ENCODE measurements at regions of chr6 and their contacts with region 1.

Region 1: GRCh38 chr6:143149771-143150170 is 89.1 kb downstream of the AIG1 start:
- DNase-seq: no peak
- ATAC-seq: no peak
- H3K4me3 ChIP-seq: no peak overlapping the region
- H3K4me3 Mint-ChIP-seq: no peak overlapping the region
- H3K27ac ChIP-seq: no peak overlapping the region
- H3K27ac Mint-ChIP-seq: no peak overlapping the region
- H3K4me1 ChIP-seq: no peaks in the 10 kb centered on the region
- H3K4me1 Mint-ChIP-seq: no peaks in the 10 kb centered on the region
- H3K27me3 ChIP-seq: no peaks in the 10 kb centered on the region
- H3K27me3 Mint-ChIP-seq: no peaks in the 10 kb centered on the region

Region 2: DNA sequence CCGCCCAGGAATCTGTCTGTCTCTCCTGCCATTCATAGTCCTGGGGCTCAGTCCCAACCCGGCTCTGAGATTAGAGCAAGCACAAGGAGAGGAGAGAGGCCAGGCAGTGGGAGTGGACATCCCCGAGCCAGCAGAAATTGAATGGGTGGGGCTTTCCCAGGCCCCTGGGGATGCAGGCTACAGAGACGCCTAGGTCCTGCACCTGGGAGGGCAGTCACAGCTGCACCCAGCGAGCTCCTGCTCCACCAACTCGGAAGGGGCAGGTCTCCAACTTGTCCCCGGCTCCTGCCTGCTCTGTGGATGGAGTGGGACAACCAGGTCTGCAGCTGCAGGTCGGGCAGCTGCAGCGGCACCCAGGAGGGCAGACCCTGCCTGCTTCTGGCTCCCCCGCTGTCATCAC is 100.2 kb before region 1 on chr6:
- CTCF ChIA-PET with region 1: no interaction called
- POLR2A ChIA-PET with region 1: interaction called in 1 of 2 experiments, 10 read pairs
- DNase-seq: no peak
- ATAC-seq: no peak
- H3K4me3 ChIP-seq: no peak overlapping the region
- H3K4me3 Mint-ChIP-seq: no peak overlapping the region
- H3K27ac ChIP-seq: no peak overlapping the region
- H3K27ac Mint-ChIP-seq: no peak overlapping the region
- H3K4me1 ChIP-seq: peaks cover 0 to 2% of the 10 kb centered on the region in 2 experiments
- H3K4me1 Mint-ChIP-seq: peaks cover 5 to 13% (median 7%) of the 10 kb centered on the region in 3 donors
- H3K27me3 ChIP-seq: peaks cover 0 to 12% of the 10 kb centered on the region in 2 experiments
- H3K27me3 Mint-ChIP-seq: peaks cover 0 to 17% of the 10 kb centered on the region in 2 donors

Region 3: DNA sequence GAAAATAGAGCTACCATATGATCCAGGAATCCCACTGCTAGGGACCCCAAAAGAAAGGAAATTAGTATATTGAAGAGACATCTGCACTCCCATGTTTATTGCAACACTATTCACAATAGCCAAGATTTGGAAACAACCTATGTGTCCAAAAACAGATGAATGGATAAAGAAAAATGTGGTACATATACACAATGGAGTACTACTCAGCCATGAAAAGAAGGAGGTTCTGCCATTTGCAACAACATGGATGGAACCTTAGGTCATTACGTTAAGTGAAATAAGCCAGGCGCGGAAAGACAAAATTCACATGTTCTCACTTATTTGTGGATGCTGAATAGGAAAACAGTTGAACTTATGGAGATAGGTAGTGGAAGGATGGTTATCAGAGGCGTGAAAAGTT is 163.4 kb after region 1 on chr6:
- CTCF ChIA-PET with region 1: no interaction called
- POLR2A ChIA-PET with region 1: no interaction called
- DNase-seq: no peak
- ATAC-seq: no peak
- H3K4me3 ChIP-seq: no peak overlapping the region
- H3K4me3 Mint-ChIP-seq: no peak overlapping the region
- H3K27ac ChIP-seq: no peak overlapping the region
- H3K27ac Mint-ChIP-seq: no peak overlapping the region
- H3K4me1 ChIP-seq: no peaks in the 10 kb centered on the region
- H3K4me1 Mint-ChIP-seq: no peaks in the 10 kb centered on the region
- H3K27me3 ChIP-seq: no peaks in the 10 kb centered on the region
- H3K27me3 Mint-ChIP-seq: peaks cover 0 to 12% of the 10 kb centered on the region in 2 donors

Region 4: GRCh38 chr6:144744720-144745119 is 1594.9 kb after region 1 on chr6:
- CTCF ChIA-PET with region 1: no interaction called
- POLR2A ChIA-PET with region 1: no interaction called
- DNase-seq: no peak
- ATAC-seq: no peak
- H3K4me3 ChIP-seq: no peak overlapping the region
- H3K4me3 Mint-ChIP-seq: no peak overlapping the region
- H3K27ac ChIP-seq: no peak overlapping the region
- H3K27ac Mint-ChIP-seq: no peak overlapping the region
- H3K4me1 ChIP-seq: no peaks in the 10 kb centered on the region
- H3K4me1 Mint-ChIP-seq: peaks cover 4 to 15% (median 5%) of the 10 kb centered on the region in 3 donors
- H3K27me3 ChIP-seq: no peaks in the 10 kb centered on the region
- H3K27me3 Mint-ChIP-seq: no peaks in the 10 kb centered on the region

Measured in T-cell (primary cell).